ENCODE measurements at regions of chr3 and their contacts with region 1.

Region 1: GRCh38 chr3:141231101-141231935 is at the start of gene PXYLP1:
- DNase-seq: peak; percentile 89
- H3K4me3 ChIP-seq: peak within 1 kb of the TSS; percentile 78
- H3K27ac ChIP-seq: peak within 1 kb of the TSS; percentile 79
- H3K4me1 ChIP-seq: peaks cover 13% of the 10 kb centered on the region
- H3K27me3 ChIP-seq: no peaks in the 10 kb centered on the region
- CTCF ChIP-seq: peak; percentile 48
- total RNA-seq, gene PXYLP1: 11.3 and 14.7 TPM in 2 replicates

Region 2: GRCh38 chr3:140368223-140368811 is 863.0 kb before region 1 on chr3:
- CTCF ChIA-PET with region 1: interaction called, 14 read pairs
- POLR2A ChIA-PET with region 1: no interaction called
- intact Hi-C with region 1: no loop called
- DNase-seq: no peak
- H3K4me3 ChIP-seq: no peak overlapping the region
- H3K27ac ChIP-seq: no peak overlapping the region
- H3K4me1 ChIP-seq: no peaks in the 10 kb centered on the region
- H3K27me3 ChIP-seq: no peaks in the 10 kb centered on the region
- CTCF ChIP-seq: no peak

Region 3: GRCh38 chr3:141279077-141279967 is 48.0 kb after region 1 on chr3:
- CTCF ChIA-PET with region 1: interaction called, 11 read pairs
- POLR2A ChIA-PET with region 1: no interaction called
- intact Hi-C with region 1: loop called (anchors 1 kb)
- DNase-seq: peak; percentile 49
- H3K4me3 ChIP-seq: no peak overlapping the region
- H3K27ac ChIP-seq: no peak overlapping the region
- H3K4me1 ChIP-seq: no peaks in the 10 kb centered on the region
- H3K27me3 ChIP-seq: no peaks in the 10 kb centered on the region
- CTCF ChIP-seq: peak; percentile 67

Region 4: DNA sequence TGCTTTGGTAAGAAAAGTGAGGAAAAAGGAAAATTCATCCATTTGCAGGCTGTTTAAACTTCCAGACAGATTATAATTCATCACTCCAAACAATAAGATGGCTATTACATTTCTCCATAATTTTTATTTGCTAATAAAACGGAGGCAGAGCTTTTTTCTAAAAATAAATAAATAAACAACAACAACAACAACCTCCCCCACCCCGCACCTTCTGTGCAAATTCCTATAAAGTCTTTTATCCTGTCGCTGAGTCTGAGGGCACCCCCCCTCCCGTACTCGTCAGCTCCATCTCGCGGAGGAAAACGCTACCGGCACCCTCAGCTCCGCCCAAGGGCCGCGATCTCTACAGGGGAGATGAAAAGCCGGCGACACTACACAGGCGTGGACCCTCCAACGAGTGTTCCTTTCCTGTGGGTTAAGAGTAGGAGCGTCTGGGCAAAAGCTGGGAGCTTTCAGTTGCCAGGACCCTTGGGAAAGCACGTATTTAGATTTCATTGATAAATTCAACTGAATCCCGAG is 644.1 kb after region 1 on chr3:
- CTCF ChIA-PET with region 1: no interaction called
- POLR2A ChIA-PET with region 1: no interaction called
- intact Hi-C with region 1: loop called (anchors 10 kb)
- DNase-seq: peak; percentile 93
- H3K4me3 ChIP-seq: peak overlapping the region; percentile 99
- H3K27ac ChIP-seq: peak overlapping the region; percentile 97
- H3K4me1 ChIP-seq: peaks cover 23% of the 10 kb centered on the region
- H3K27me3 ChIP-seq: no peaks in the 10 kb centered on the region
- CTCF ChIP-seq: peak; percentile 93

Measured in A673 (cell line).